H1 (cell line): ENCODE measurements at regions of chr11 and their contacts with region 1.

Region 1: DNA sequence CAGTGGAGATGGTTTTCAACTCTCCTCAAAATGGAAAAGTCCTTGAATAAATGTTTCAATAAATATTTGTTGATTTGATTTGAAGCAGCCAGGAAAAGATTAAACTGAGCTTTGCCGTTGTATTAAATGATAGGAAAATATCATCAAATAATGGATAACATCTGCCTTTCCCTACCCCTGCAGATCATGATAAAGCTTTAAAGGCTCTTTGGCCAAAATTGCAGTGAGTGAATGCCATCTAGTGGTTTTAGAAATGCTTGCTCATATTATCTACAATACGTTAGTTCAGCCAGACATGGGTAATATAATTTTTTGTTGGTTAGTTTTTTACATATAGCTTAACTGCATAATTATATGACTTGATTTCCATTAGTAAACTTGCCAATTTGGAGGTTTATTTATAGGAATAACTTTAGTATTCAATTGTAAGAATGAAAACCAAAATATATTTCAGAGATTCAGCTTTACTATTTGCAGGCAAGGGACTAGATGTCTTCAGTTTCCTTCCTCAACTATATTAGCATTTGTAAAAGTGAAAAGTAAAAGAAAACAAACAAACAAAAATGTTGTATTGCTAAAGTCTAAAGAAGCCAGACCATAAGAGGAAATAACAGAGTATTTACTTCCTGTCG is 159.2 kb downstream of the MSANTD4 start:
- DNase-seq: no peak
- H3K4me3 ChIP-seq: no peak overlapping the region
- H3K27ac ChIP-seq: no peak overlapping the region
- H3K4me1 ChIP-seq: peaks cover 0 to 5% (median 3%) of the 10 kb centered on the region in 4 experiments; a peak in 4 of 7 replicates
- H3K27me3 ChIP-seq: peaks cover 0 to 1% (median 0%) of the 10 kb centered on the region in 4 experiments; a peak in 1 of 7 replicates
- CTCF ChIP-seq: peak in 2 of 3 experiments; percentile 46 to 57; a peak in 2 of 4 replicates
- EP300 ChIP-seq: no peak
- POLR2A ChIP-seq: no peak
- RAD21 ChIP-seq: peak; percentile 90 to 91

Region 2: DNA sequence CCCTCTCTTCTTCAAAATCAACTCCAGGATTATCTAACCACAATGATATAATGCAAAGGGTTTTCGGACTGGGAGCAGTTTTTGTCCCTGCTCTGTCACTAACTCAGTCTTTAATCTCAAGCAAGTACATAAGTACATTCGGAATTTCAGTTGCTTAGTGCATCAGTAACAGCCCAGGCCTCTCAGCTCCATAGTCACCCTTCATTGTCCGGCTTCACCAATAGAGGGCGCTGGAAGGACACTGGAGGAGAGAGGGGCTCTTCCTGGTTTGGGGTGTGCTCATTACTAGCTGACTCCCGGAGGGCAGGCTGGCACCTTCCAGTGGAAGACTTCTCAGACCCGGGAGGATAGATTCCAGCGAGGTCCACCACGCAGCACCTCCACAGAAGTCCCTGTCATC is 1608.5 kb before region 1 on chr11:
- CTCF ChIA-PET with region 1: interaction called, 10 read pairs
- POLR2A ChIA-PET with region 1: no interaction called
- DNase-seq: peak; percentile 65 to 87
- H3K4me3 ChIP-seq: no peak overlapping the region
- H3K27ac ChIP-seq: no peak overlapping the region
- H3K4me1 ChIP-seq: no peaks in the 10 kb centered on the region
- H3K27me3 ChIP-seq: no peaks in the 10 kb centered on the region
- CTCF ChIP-seq: peak; percentile 81 to 95 (median 87)
- EP300 ChIP-seq: no peak
- POLR2A ChIP-seq: no peak
- RAD21 ChIP-seq: peak; percentile 95 to 97

Region 3: DNA sequence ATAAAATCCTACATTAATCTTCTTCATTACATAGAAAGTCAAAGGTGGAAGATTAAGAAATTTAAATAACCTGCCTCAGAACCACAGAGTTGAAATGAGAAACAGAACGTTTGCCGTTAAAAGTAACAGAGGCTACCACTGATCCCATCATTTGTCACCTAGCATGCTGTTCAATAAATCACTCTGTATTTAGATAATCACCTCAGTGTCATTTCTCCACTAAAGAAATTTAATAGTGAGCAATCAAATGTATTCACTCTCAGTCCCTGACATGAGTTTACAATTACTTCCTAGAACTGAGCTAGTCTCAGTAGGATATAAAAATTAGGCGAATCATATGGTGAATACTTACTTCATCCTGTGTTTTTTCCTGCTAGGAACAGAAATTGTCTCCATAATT is 10.4 kb before region 1 on chr11:
- CTCF ChIA-PET with region 1: interaction called, 33 read pairs
- POLR2A ChIA-PET with region 1: no interaction called
- DNase-seq: no peak
- H3K4me3 ChIP-seq: no peak overlapping the region
- H3K27ac ChIP-seq: no peak overlapping the region
- H3K4me1 ChIP-seq: no peaks in the 10 kb centered on the region
- H3K27me3 ChIP-seq: no peaks in the 10 kb centered on the region
- CTCF ChIP-seq: no peak
- EP300 ChIP-seq: no peak
- POLR2A ChIP-seq: no peak
- RAD21 ChIP-seq: no peak

Region 4: DNA sequence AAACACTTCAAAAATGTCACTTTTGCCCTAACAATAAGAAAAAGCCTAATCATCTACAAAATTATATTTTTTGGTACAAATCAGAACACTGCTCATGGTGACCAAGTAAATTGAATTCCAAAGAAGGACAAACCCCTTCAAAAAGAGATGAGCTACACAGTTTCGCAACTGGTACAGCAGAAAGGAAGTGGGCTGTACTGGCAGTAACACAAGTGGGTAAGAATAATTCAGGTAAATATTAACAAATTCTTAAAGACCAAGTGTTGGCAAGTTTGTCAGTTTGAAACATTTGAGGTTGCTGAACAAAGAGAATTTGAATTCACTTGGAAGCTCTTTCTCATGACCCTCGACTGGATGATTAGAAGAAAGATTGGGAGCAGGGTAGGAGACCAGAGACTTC is 123.7 kb after region 1 on chr11:
- CTCF ChIA-PET with region 1: no interaction called
- POLR2A ChIA-PET with region 1: no interaction called
- DNase-seq: no peak
- H3K4me3 ChIP-seq: no peak overlapping the region
- H3K27ac ChIP-seq: no peak overlapping the region
- H3K4me1 ChIP-seq: no peaks in the 10 kb centered on the region; a peak in 1 of 7 replicates
- H3K27me3 ChIP-seq: no peaks in the 10 kb centered on the region
- CTCF ChIP-seq: no peak
- EP300 ChIP-seq: no peak
- POLR2A ChIP-seq: no peak
- RAD21 ChIP-seq: no peak